ENCODE measurements at regions of chr5 and their contacts with region 1.

Region 1: GRCh38 chr5:175444060-175444904 is at the start of gene DRD1:
- DNase-seq: peak; percentile 81
- H3K4me3 ChIP-seq: peak within 1 kb of the TSS in 7 of 8 donors; percentile 4 to 62 (median 28)
- H3K27ac ChIP-seq: no peak within 1 kb of the TSS
- H3K4me1 ChIP-seq: peaks cover 7 to 19% (median 15%) of the 10 kb centered on the region in 6 donors
- H3K27me3 ChIP-seq: peaks cover 4 to 89% (median 39%) of the 10 kb centered on the region in 7 donors
- CTCF ChIP-seq: peak in 7 of 11 experiments; percentile 42 to 79 (median 65)
- POLR2A ChIP-seq: no peak
- total RNA-seq, gene DRD1: 0.11 to 0.83 (median 0.14) TPM in 4 of 7 donors, not detected in the others

Region 2: DNA sequence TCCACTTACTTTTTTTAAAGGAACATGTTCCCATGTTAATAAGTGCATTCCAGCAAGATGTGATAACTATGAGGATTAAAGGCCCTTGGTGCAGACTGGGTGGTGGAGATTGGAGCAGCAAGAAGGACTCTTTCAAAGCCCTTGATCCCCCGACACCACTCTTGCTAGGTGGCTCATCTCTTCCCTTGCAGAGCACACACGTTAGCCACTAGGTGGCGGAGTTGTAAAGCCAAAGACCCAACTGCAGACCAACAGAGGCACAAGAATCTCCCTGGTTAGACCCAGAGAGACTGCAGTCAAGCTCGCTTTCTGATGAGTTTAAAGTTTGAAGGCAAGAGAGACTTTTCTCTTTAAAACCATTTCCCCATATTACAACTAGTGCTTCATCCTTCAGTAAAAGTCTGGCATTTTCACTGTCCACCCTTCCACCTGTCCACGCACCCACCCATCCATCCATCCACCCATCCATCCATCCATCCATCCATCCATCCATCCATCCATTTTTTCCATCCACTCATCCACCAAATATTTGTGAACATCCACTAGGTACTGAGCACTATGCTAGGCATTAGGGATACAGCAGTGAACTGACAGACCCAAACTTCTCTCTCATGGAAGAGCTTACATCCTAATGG is 493.0 kb before region 1 on chr5:
- intact Hi-C with region 1: loop called (anchors 10 kb)
- DNase-seq: no peak
- H3K4me3 ChIP-seq: no peak overlapping the region
- H3K27ac ChIP-seq: no peak overlapping the region
- H3K4me1 ChIP-seq: no peaks in the 10 kb centered on the region
- H3K27me3 ChIP-seq: peaks cover 0 to 19% (median 0%) of the 10 kb centered on the region in 7 donors
- CTCF ChIP-seq: peak in 10 of 11 experiments; percentile 24 to 84 (median 64)
- POLR2A ChIP-seq: no peak

Region 3: GRCh38 chr5:175246242-175246888 is 197.9 kb before region 1 on chr5:
- intact Hi-C with region 1: no loop called
- DNase-seq: no peak
- H3K4me3 ChIP-seq: no peak overlapping the region
- H3K27ac ChIP-seq: no peak overlapping the region
- H3K4me1 ChIP-seq: no peaks in the 10 kb centered on the region
- H3K27me3 ChIP-seq: peaks cover 0 to 21% (median 0%) of the 10 kb centered on the region in 7 donors
- CTCF ChIP-seq: no peak
- POLR2A ChIP-seq: no peak

Region 4: GRCh38 chr5:176144508-176144907 is 700.2 kb after region 1 on chr5:
- intact Hi-C with region 1: no loop called
- DNase-seq: no peak
- H3K4me3 ChIP-seq: no peak overlapping the region
- H3K27ac ChIP-seq: no peak overlapping the region
- H3K4me1 ChIP-seq: no peaks in the 10 kb centered on the region
- H3K27me3 ChIP-seq: peaks cover 0 to 9% (median 0%) of the 10 kb centered on the region in 7 donors
- CTCF ChIP-seq: no peak
- POLR2A ChIP-seq: no peak

Measured in spleen (tissue), 13 donors.